ENCODE measurements at regions of chr1 and their contacts with region 1.

Region 1: DNA sequence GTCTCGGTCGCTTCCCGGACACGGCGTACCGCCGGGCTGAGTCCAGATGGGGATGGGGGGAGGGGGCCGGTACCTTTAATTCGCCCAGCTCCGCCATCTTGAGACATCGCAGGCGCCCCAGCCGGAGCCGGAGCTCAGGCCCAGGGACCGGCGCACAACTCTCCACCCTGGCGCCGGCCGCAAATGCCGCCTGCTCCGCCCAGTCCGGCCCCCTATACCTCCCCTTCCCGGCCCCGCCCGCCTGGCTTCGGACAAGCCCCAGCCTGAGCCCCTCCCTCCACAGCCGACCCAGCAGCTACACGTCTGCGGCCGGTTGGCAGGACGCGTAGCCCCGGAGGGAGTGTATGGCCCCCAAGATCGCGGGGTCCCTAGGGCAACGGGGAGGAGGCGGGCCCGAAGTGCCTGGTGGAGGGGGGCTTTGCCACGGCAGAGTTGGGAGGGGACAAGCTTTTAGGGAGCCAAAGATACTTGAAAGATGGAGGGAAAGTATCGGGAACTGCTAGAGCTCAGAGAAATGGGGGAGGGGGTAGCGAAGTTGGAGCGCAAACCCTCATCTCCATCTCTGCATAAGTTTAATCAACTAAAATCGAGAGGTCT is at the start of gene PIAS3:
- DNase-seq: peak; percentile 67
- ATAC-seq: peak; percentile 94
- H3K4me3 ChIP-seq: peak within 1 kb of the TSS; percentile 85 to 98
- H3K27ac ChIP-seq: peak within 1 kb of the TSS; percentile 95
- H3K4me1 ChIP-seq: peaks cover 17% of the 10 kb centered on the region
- H3K27me3 ChIP-seq: no peaks in the 10 kb centered on the region
- CTCF ChIP-seq: no peak
- total RNA-seq, gene PIAS3: 68.1 TPM

Region 2: DNA sequence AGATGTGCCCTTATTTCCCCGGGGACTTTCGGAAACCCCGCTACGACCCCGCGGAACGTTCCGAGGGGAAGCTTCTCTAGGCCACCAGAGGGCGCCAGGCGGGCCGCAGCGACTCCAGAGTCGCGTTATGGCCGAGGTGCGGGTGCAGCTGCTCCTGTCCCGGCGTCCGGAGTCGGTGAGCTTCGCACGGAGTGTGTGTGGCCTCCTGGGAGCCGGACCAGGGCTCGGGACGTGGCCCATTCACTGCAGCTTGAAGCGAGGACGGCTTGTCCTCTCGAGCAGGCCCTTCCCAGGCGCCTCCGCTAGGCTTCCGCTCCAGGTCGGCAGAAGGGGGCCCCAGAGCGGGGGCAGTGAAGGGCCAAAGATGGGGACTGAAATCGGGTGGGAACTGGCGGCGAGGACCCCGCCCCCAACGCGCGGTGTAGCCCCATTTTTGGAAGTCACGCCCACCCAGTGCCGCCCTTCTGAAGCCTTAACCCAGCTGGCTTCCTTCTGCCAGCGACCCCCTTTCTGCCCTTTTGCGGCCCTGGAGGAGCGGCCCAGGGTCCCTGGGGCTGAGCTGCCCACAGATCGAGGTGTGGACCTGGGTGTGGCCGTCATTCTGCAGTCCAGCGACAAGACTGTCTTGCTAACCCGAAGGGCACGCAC is 13.4 kb before region 1 on chr1 and contains the start of gene NUDT17:
- CTCF ChIA-PET with region 1: interaction called, 25 read pairs
- POLR2A ChIA-PET with region 1: interaction called, 4 read pairs
- in situ Hi-C with region 1: no loop called
- intact Hi-C with region 1: no loop called
- DNase-seq: no peak
- ATAC-seq: peak; percentile 89
- H3K4me3 ChIP-seq: peak within 1 kb of the TSS; percentile 54 to 65
- H3K27ac ChIP-seq: peak within 1 kb of the TSS; percentile 81
- H3K4me1 ChIP-seq: 0 out of 2 replicates have a peak, but pooled peaks cover 4% of the 10 kb centered on the region
- H3K27me3 ChIP-seq: no peaks in the 10 kb centered on the region
- CTCF ChIP-seq: peak; percentile 99
- total RNA-seq, gene NUDT17: 3.7 TPM

Region 3: GRCh38 chr1:145918144-145918992 is 59.4 kb after region 1 on chr1 and contains the start of gene PEX11B:
- CTCF ChIA-PET with region 1: no interaction called
- POLR2A ChIA-PET with region 1: no interaction called
- in situ Hi-C with region 1: no loop called
- intact Hi-C with region 1: loop called (anchors 10 kb)
- DNase-seq: peak; percentile 78
- ATAC-seq: peak; percentile 91
- H3K4me3 ChIP-seq: peak within 1 kb of the TSS; percentile 92 to 94
- H3K27ac ChIP-seq: peak within 1 kb of the TSS; percentile 93
- H3K4me1 ChIP-seq: peaks cover 18% of the 10 kb centered on the region
- H3K27me3 ChIP-seq: no peaks in the 10 kb centered on the region
- CTCF ChIP-seq: no peak
- total RNA-seq, gene PEX11B: 27.4 TPM

Measured in Panc1 (cell line).